Activated T-helper 1 cell treated with anti-CD3 and anti-CD28 coated beads, Interleukin-12 subunit alpha, Interleukin-12 subunit beta, Interleukin-2, Interleukin-4 antibody, amounts not matched to agents 30 ng/mL and 10 ng/mL and 1 ng/mL, durations not matched to agents 14 hours and 24 hours and 36 hours (primary cell): ENCODE measurements at regions of chr5 and their contacts with region 1.

Region 1: DNA sequence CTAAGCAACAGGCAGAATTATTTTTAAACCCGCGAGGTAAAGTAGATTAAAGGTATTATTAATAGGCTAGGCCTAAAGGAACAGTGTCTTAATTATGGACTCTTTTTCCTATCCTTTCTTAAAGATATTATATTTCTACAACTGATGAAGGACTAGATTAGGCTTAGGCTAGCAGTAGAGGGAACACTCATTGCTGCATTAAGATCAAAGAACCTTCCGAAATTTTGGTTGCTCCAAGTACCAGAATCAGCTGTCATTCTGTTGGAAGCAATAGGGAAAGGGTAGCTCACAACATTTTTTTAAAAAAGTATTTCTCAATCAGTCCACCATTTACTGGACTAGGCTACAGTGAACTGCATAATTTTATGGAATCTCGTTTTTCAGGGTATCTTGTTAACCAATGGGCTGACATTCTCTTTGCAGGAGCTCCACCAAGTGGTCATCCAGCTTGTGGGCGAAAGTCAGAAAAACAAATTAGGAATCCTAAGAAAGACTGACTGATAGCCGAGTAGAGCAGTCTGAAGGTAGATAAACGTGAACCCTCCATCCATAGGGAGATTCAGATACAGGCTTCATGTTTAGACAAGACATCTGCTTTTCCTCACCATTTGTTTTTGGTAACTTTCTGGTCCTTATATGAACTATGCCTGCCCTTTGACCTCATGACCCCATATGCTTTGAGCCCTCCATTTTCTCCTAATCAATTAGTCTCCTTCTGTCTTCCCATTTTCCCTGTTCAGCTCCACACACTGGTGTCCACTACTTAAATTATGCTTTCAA is 103.6 kb upstream of the CHD1 start:
- DNase-seq: no peak
- H3K4me3 Mint-ChIP-seq: peak overlapping the region; percentile 79
- H3K27ac Mint-ChIP-seq: peak overlapping the region; percentile 86
- H3K4me1 Mint-ChIP-seq: peaks cover 78% of the 10 kb centered on the region
- H3K27me3 Mint-ChIP-seq: peaks cover 2% of the 10 kb centered on the region

Region 2: DNA sequence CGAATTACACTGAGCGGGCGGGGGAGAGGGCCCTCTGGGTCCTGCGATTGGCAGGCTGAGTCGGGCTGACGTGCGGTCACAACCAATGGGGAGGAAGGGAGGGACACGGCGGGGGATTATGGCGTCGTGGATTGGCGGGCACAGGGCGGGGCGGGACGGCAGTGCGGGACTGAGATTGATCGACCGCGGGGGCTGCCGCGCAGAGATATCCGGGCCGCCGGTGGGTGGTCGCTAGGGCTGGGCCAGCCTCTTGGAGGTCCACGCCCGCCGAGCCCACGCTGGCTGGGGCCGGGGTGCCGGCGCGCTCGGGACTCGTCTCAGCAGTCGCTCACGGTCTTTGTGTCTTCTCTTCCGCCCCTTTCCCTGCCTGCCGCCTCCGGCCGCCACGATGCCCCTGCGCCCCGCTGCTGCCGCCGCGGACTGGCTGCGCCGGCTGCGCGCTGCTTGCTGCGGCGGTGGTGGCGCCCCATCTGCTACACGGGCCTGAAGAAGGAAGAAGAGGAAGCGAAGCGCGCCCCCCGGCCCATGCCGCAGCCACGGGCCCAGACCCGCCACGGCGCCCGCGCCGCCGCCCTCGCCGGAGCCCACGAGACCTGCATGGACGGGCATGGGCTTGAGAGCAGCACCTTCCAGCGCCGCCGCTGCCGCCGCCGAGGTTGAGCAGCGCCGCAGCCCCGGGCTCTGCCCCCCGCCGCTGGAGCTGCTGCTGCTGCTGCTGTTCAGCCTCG is 258.8 kb before region 1 on chr5 and contains the start of gene RGMB:
- intact Hi-C with region 1: loop called (anchors 10 kb)
- DNase-seq: peak; percentile 77
- H3K4me3 Mint-ChIP-seq: peak within 1 kb of the TSS; percentile 93
- H3K27ac Mint-ChIP-seq: peak within 1 kb of the TSS; percentile 52
- H3K4me1 Mint-ChIP-seq: peaks cover 50% of the 10 kb centered on the region
- H3K27me3 Mint-ChIP-seq: peaks cover 79% of the 10 kb centered on the region
- total RNA-seq, gene RGMB: 0.29 and 0.39 TPM in 2 replicates

Region 3: GRCh38 chr5:98905857-98906690 is 126.3 kb before region 1 on chr5:
- intact Hi-C with region 1: loop called (anchors 1 kb)
- DNase-seq: no peak
- H3K4me3 Mint-ChIP-seq: no peak overlapping the region
- H3K27ac Mint-ChIP-seq: no peak overlapping the region
- H3K4me1 Mint-ChIP-seq: peaks cover 56% of the 10 kb centered on the region
- H3K27me3 Mint-ChIP-seq: no peaks in the 10 kb centered on the region

Region 4: DNA sequence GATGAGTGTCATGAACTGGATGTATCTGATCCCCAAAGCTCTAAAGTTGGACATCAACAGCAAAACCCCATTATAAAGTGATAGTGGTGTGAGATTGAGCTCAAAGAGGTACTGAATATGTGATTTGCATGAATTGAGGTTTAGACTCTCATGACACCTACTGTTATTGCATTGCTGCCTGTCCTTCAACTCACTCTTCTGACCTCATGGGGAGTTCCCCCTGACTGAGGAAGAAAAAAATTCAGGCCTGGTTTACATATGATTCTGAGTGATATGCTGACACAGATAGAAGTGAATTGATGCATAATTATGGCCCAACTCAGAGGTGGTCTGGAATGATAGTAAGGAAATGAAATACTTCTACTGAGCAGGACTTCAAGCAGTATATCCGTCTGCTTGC is 27.5 kb before region 1 on chr5:
- intact Hi-C with region 1: loop called (anchors 1 kb)
- DNase-seq: peak; percentile 10
- H3K4me3 Mint-ChIP-seq: no peak overlapping the region
- H3K27ac Mint-ChIP-seq: no peak overlapping the region
- H3K4me1 Mint-ChIP-seq: peaks cover 21% of the 10 kb centered on the region
- H3K27me3 Mint-ChIP-seq: peaks cover 4% of the 10 kb centered on the region

Region 5: DNA sequence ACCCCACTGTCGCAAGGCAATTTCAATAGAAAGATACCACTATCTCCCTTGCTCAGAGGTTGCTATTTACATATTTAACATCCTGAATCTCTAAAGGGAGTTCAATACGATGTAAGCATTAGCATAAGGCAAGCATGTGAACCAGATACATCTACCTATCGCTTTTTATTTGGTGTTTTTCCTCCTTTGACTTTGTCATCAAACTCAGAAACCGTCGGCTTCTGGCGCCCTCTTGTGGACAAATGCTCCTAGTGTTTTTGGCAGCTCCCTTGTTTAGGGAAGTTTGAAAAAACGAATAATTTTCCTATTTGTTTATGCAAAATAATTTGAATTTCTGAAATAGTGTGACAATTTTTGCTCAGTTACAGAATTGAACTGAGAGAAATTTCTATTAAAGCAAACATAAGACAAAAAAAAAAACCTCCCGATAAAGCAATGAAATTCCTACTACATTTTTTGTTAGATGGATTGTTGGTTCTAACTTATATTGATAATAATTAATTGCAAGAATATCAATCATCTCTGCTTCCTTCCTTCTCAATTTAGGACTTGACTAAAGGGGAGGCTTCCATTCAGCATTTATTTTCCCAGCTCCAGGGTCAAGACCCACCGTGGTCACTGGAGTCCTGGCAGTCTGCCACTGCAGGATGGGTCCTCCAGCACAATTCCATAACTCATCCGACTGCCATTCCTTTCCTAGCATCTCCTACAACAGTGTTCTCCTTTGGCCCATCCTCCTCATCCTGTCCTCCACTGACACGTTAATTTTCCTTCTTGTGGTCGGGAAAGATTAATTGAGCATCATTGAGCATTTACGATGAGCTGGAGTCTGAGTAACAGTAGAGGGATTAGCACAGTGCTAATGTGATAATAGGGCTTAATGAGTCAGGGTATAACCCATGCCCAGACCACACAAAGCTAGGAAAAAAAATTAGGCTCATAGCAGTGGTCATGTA is 28.2 kb after region 1 on chr5:
- intact Hi-C with region 1: loop called (anchors 1 kb)
- DNase-seq: peak; percentile 69
- H3K4me3 Mint-ChIP-seq: no peak overlapping the region
- H3K27ac Mint-ChIP-seq: no peak overlapping the region
- H3K4me1 Mint-ChIP-seq: peaks cover 5% of the 10 kb centered on the region
- H3K27me3 Mint-ChIP-seq: peaks cover 16% of the 10 kb centered on the region